Panc1 (cell line): ENCODE measurements at regions of chr2 and their contacts with region 1.

Region 1: GRCh38 chr2:228657807-228658402 is 476.4 kb upstream of the SPHKAP start:
- DNase-seq: peak; percentile 10
- ATAC-seq: peak; percentile 63; the same call in 1 of the 2 replicates
- H3K4me3 ChIP-seq: no peak overlapping the region
- H3K27ac ChIP-seq: no peak overlapping the region
- H3K4me1 ChIP-seq: no peaks in the 10 kb centered on the region
- H3K27me3 ChIP-seq: no peaks in the 10 kb centered on the region
- CTCF ChIP-seq: peak; percentile 56; the same call in 1 of the 2 replicates

Region 2: GRCh38 chr2:227890495-227891079 is 767.3 kb before region 1 on chr2:
- CTCF ChIA-PET with region 1: no interaction called
- POLR2A ChIA-PET with region 1: no interaction called
- in situ Hi-C with region 1: no loop called
- intact Hi-C with region 1: loop called (anchors 2 kb)
- DNase-seq: no peak
- ATAC-seq: peak; percentile 85
- H3K4me3 ChIP-seq: no peak overlapping the region
- H3K27ac ChIP-seq: no peak overlapping the region
- H3K4me1 ChIP-seq: no peaks in the 10 kb centered on the region
- H3K27me3 ChIP-seq: no peaks in the 10 kb centered on the region
- CTCF ChIP-seq: peak; percentile 51; the same call in 1 of the 2 replicates